Head of caudate nucleus (tissue), 42 donors: ENCODE measurements at regions of chr22 and their contacts with region 1.

Region 1: DNA sequence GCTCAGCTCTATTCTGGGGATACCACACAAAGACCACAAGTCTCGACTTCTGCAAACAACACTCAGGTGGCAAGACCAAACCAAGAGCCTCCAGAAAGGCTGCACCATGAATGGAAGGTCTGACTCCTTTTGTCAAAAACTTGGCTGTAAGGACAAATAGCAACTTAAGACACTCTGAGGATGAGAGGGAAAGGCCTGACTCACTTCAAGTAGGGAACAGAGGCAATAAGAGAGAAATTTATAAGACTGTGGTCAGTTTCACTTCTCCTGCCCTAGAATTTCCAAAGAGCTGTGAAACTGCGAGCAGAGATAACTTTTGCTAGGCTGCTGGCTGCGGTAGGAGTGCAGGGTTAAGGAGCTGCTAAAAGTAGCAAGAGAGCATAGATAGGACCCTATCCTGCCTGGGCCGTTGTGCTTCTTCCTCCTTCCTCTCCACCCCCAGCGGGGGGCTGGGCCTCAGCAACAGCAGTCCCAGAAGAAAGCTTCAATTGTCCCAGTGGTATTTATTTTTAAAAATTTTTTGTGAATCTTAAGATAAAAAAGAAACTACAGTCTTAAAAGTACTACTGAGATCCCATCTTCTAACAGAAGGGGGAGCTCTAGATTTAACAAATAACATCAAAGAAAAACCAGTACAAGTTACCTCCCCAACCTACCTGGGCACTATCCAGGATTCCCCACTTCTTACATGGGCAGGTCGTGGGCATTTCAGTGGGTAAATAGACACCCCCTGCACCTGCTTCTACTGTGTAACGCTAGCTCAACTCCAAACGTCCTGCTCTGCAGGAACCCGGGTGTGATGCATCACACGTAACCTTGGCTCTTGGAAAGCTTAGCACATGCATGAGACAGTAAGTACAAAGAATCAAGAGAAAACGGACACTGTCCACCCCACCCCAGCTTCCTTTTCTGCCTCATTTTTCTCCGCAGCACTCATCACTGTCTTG is 66.4 kb downstream of the SGSM3 start:
- DNase-seq: peak in 19 of 42 donors; percentile 17 to 64 (median 40)

Region 2: DNA sequence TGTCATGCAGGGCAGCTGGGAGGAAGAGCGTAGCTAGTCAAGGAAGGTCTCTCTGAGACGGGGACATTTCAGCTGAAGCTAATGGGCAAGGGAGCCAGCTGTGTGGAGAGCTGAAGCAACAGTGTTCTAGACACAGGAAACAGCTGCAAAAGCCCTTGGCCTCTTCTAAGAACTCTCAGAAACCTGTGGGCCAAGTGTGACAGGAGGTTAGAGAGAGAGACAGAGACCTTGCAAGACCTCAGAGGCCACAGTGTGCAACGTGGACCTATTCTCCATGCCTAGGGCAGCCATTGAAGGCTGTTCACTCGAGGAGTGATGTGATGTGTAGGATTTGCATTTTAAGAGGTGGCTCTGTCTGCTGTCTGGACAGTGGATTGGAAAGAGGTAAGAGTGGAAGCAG is 307.8 kb before region 1 on chr22:
- intact Hi-C with region 1: no loop called
- DNase-seq: no peak

Region 3: DNA sequence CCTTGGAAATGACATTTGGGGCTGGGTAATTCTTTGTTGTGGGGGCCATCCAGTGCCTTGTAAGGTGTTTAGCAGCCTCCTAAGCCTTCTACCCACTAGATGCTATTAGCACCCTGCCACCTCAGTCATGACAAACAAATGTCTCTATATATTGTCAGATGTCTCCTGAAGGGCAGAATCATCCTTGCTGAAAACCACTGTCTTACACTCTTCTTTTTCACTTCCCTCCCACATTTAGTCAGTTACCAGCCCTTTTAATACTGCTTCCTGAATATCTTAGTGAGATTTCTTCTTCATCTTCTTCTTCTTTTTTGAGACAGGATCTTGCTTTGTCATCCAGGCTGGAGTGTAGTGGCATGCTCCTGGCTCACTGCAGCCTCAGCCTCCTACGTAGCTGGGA is 226.0 kb before region 1 on chr22:
- intact Hi-C with region 1: no loop called
- DNase-seq: no peak

Region 4: DNA sequence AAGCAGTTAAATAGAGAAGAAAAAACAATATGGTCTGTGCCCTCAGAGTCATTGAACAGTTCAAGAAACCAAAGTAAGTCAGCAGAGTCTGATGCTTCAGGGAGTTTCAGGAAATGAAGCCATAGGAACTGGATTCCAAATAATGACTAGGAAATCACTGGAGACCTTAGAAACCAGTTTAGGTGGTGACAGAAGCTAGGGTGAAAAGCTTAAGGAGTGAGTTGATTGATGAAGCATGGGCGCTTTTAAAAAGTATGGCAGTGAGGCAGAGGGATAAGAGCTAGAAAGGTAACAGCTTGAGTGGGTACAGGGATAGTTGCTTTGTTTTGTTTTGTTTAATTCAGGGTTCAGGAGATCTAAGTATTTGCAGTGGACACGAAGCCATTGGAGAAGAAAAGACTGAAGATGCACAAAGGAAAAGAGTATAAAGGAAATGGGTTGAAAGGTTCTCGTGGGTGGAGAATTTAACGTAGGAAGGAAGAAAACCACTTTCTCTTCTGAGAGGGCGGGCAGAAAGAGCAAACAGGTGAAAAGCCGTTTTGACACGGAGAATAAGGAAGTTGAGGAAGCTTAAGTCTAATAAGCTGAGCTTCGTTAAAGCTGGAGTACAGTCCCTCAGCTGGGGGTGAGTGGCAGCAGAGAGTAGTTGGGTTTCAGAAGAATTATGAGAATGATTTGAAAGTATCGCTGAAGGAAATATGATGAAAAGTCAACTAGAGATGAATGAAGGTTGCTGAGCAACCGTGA is 51.6 kb before region 1 on chr22:
- intact Hi-C with region 1: no loop called
- DNase-seq: peak in 3 of 42 donors; percentile 25 to 45 (median 27)

Region 5: GRCh38 chr22:40487663-40488249 is 51.0 kb after region 1 on chr22:
- intact Hi-C with region 1: loop called (anchors 10 kb)
- DNase-seq: peak in 2 of 42 donors; percentile 5 to 27

Region 6: GRCh38 chr22:40645579-40646197 is 208.9 kb after region 1 on chr22:
- intact Hi-C with region 1: loop called (anchors 5 kb)
- DNase-seq: no peak